ENCODE measurements at regions of chr12 and their contacts with region 1.

Region 1: GRCh38 chr12:5988659-5989116 is 43.6 kb upstream of the ANO2 start:
- DNase-seq: peak; percentile 61
- ATAC-seq: peak; percentile 100
- H3K4me3 ChIP-seq: no peak overlapping the region
- H3K27ac ChIP-seq: no peak overlapping the region
- H3K4me1 ChIP-seq: peaks cover 2 to 5% of the 10 kb centered on the region in 2 experiments; a peak in 2 of 4 replicates
- H3K27me3 ChIP-seq: no peaks in the 10 kb centered on the region
- CTCF ChIP-seq: peak; percentile 93 to 98 (median 98)
- POLR2A ChIP-seq: no peak
- RAD21 ChIP-seq: peak; percentile 96

Region 2: GRCh38 chr12:5965950-5966383 is 22.7 kb before region 1 on chr12:
- CTCF ChIA-PET with region 1: interaction called, 10 read pairs
- POLR2A ChIA-PET with region 1: no interaction called
- RAD21 ChIA-PET with region 1: no interaction called
- intact Hi-C with region 1: no loop called
- DNase-seq: peak; percentile 28
- ATAC-seq: peak; percentile 99
- H3K4me3 ChIP-seq: no peak overlapping the region
- H3K27ac ChIP-seq: no peak overlapping the region
- H3K4me1 ChIP-seq: no peaks in the 10 kb centered on the region; a peak in 1 of 4 replicates
- H3K27me3 ChIP-seq: no peaks in the 10 kb centered on the region
- CTCF ChIP-seq: peak; percentile 58 to 90 (median 88); a peak in 5 of 6 replicates
- POLR2A ChIP-seq: no peak
- RAD21 ChIP-seq: peak; percentile 47

Region 3: GRCh38 chr12:6033546-6033945 is 44.9 kb after region 1 on chr12:
- CTCF ChIA-PET with region 1: interaction called, 321 read pairs
- POLR2A ChIA-PET with region 1: interaction called, 15 read pairs
- RAD21 ChIA-PET with region 1: interaction called, 32 to 38 read pairs
- intact Hi-C with region 1: loop called (anchors 1 kb)
- DNase-seq: no peak
- ATAC-seq: no peak
- H3K4me3 ChIP-seq: no peak overlapping the region
- H3K27ac ChIP-seq: no peak overlapping the region
- H3K4me1 ChIP-seq: peaks cover 0 to 3% of the 10 kb centered on the region in 2 experiments; a peak in 1 of 4 replicates
- H3K27me3 ChIP-seq: no peaks in the 10 kb centered on the region
- CTCF ChIP-seq: no peak
- POLR2A ChIP-seq: no peak
- RAD21 ChIP-seq: no peak

Region 4: GRCh38 chr12:6039894-6040568 is 51.3 kb after region 1 on chr12:
- CTCF ChIA-PET with region 1: interaction called, 321 read pairs
- POLR2A ChIA-PET with region 1: interaction called, 15 read pairs
- RAD21 ChIA-PET with region 1: interaction called, 32 to 38 read pairs
- intact Hi-C with region 1: loop called (anchors 1 kb)
- DNase-seq: peak; percentile 57
- ATAC-seq: peak; percentile 85
- H3K4me3 ChIP-seq: no peak overlapping the region
- H3K27ac ChIP-seq: no peak overlapping the region
- H3K4me1 ChIP-seq: peaks cover 4 to 19% of the 10 kb centered on the region in 2 experiments; a peak in 3 of 4 replicates
- H3K27me3 ChIP-seq: no peaks in the 10 kb centered on the region
- CTCF ChIP-seq: peak; percentile 83 to 92 (median 89)
- POLR2A ChIP-seq: no peak
- RAD21 ChIP-seq: peak; percentile 93

Region 5: DNA sequence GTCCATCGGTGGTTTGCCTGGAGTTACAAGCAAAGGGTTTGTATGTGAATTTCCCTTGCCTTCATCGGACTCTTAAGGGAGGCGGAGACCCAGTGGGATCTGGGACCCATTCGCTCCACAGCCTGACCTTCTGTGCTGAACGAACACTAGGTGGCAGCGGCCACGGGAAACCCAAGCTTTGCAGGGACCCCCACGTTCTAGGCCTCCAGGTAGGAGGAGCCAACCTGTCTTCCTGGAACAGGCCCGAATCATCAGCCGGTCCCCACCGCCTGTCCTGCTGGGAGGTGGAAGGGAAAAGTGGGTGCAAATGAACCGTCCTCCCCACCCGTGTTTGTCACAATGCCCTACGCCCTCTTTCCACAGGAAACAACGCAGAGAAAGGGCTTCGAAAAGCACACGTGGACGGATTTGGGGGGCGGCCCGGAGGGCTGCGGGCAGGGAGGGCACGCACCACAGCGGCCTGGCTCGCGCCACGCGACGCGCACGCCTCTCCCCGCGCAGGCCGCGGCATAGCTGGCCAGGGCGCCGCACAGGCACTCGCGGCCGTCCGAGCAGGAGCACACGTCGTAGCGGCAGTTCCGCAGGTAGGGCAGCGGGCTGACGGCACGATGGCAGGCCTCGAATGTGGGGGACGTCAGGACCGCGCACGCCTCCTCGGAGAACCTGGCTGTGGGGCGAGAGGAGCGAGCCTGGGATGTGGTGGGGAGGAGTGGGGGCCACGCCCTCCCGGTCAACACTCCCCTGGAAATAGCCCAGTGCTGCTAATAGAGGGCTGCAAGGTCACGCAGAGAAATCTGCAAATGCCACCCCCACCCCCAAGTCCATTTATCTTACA is 67.9 kb after region 1 on chr12:
- CTCF ChIA-PET with region 1: interaction called, 10 read pairs
- POLR2A ChIA-PET with region 1: no interaction called
- RAD21 ChIA-PET with region 1: no interaction called
- intact Hi-C with region 1: no loop called
- DNase-seq: peak; percentile 21
- ATAC-seq: peak; percentile 94
- H3K4me3 ChIP-seq: no peak overlapping the region
- H3K27ac ChIP-seq: peak overlapping the region; percentile 4; the same call in 1 of the 2 replicates
- H3K4me1 ChIP-seq: peaks cover 0 to 16% of the 10 kb centered on the region in 2 experiments; a peak in 1 of 4 replicates
- H3K27me3 ChIP-seq: no peaks in the 10 kb centered on the region
- CTCF ChIP-seq: peak; percentile 31 to 63 (median 52); a peak in 5 of 6 replicates
- POLR2A ChIP-seq: no peak
- RAD21 ChIP-seq: peak; percentile 30; the same call in 1 of the 2 replicates

Region 6: GRCh38 chr12:6285063-6285477 is 296.4 kb after region 1 on chr12:
- CTCF ChIA-PET with region 1: interaction called, 37 read pairs
- POLR2A ChIA-PET with region 1: no interaction called
- RAD21 ChIA-PET with region 1: interaction called in 1 of 2 experiments, 6 read pairs
- intact Hi-C with region 1: loop called (anchors 1 kb)
- DNase-seq: no peak
- ATAC-seq: peak; percentile 64
- H3K4me3 ChIP-seq: no peak overlapping the region
- H3K27ac ChIP-seq: no peak overlapping the region
- H3K4me1 ChIP-seq: peaks cover 29 to 66% of the 10 kb centered on the region in 2 experiments
- H3K27me3 ChIP-seq: no peaks in the 10 kb centered on the region
- CTCF ChIP-seq: peak in 2 of 3 experiments; percentile 76 to 88; a peak in 4 of 6 replicates
- POLR2A ChIP-seq: no peak
- RAD21 ChIP-seq: no peak

Measured in HCT116 (cell line).